K562 (cell line): ENCODE measurements at regions of chr1 and their contacts with region 1.

Region 1: DNA sequence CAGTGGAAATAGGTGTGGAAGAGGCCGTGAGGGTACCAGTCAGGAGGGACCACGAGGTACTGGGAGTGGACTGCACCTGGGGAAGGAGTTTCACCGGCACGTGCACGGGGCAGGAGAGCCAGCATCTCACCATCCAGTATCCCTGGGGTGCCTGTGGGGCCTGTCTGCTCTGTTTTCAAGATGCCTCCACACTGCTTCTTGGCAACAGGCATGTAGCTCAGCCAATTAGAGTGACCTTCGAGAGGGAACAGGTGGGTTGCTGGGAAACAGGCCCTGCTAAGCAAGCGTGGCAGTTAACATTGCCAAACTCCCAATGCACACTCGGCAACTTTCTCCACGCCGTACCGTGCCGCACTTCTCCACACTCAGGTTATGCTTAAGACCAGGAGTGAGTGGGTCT is 17.7 kb downstream of the KCNC4 start:
- DNase-seq: no peak
- ATAC-seq: no peak
- H3K4me3 ChIP-seq: no peak overlapping the region
- H3K27ac ChIP-seq: no peak overlapping the region
- H3K4me1 ChIP-seq: peaks cover 0 to 10% of the 10 kb centered on the region in 2 experiments; a peak in 2 of 5 replicates
- H3K27me3 ChIP-seq: peaks cover 45 to 95% of the 10 kb centered on the region in 2 experiments; a peak in 4 of 5 replicates
- CTCF ChIP-seq: no peak
- EP300 ChIP-seq: no peak
- POLR2A ChIP-seq: no peak
- RAD21 ChIP-seq: no peak

Region 2: DNA sequence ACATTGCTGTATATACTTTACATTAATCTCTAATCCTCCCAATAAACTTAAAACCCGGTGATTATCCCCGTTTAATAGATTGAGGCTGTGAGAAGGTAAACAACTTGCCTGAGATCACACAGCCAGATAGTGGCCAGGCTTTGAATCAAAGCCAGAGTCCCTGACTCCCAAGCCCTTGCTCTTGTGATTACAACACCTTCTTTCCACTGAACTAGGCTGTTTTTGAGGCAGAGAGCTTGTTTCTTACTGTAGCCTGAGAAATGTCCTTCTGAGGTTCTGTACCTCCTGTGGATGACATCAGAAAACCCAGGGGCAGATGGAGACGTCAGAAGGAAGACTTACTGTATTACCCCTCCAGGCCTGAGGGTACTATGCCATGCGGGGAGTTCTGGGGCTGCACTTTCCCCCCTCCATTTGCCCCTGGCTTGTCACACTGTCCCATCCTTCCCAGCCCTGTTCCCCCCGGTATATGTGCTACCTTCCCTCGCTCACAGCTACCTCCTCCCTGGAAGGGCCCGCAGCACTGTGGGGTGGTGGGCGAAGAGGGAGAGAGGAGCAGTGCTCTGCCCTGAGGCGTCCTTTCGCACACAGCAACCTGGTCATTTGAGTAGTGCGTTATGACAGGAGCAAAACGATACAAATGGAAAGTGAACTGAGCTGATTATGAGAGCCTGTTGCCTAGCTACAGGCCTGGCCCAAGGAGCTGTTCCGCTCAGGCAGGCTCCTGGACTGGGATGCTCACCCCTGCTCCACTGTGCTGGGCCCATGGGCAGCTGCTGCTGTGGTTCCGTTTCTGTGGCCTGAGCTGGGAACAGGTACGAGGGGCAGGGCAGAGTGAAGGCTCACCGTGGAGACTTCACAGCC is 13.0 kb before region 1 on chr1:
- CTCF ChIA-PET with region 1: no interaction called
- POLR2A ChIA-PET with region 1: interaction called, 19 read pairs
- in situ Hi-C with region 1: no loop called
- intact Hi-C with region 1: no loop called
- DNase-seq: no peak
- ATAC-seq: no peak
- H3K4me3 ChIP-seq: no peak overlapping the region
- H3K27ac ChIP-seq: no peak overlapping the region
- H3K4me1 ChIP-seq: peaks cover 0 to 27% of the 10 kb centered on the region in 2 experiments; a peak in 3 of 5 replicates
- H3K27me3 ChIP-seq: peaks cover 16 to 73% of the 10 kb centered on the region in 2 experiments
- CTCF ChIP-seq: no peak
- EP300 ChIP-seq: no peak
- POLR2A ChIP-seq: no peak
- RAD21 ChIP-seq: no peak